ENCODE measurements at regions of chr16 and their contacts with region 1.

Region 1: DNA sequence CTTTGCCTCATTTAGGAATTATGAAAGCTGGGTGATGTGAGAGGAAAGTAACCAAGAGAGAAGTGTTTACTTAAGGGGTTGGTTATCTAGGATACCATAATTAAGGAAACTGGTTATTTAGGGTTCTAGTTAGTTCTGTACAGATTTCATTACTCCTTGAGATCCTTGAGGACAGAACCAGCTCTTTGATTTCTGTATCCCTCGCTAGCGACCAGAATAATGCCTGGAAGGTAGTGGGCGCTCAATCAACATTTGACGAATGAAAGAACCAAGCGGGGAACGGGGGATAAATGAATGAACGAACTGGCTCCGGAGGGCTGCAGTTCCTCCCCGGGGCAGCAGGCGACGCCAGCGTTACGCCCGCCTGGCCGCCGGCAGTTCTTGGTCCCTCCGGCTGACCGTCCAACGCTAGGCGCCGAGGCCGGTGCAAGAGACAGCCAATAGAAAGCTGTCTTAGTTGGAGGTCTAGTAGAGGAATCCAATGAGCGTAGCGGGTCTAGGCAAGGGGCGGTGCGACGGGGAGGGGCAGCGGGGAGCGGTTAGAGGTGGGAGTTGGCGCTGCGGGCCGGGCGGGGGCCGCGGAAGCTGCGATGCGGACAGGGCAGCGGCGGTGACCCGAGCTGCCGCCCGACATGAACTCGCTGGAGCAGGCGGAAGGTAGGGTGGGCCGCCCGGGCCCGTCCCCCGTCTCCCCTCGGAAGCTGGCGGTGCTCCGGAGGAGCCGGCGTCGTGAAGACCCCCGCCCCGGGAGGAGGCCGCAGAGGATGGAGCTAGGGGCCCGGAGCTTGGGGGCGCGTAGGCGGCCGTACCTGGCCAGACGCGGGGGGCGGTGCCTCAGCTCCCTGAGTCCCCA is at the start of gene CNEP1R1:
- DNase-seq: peak; percentile 88 to 95
- H3K4me3 ChIP-seq: peak within 1 kb of the TSS; percentile 78
- H3K27ac ChIP-seq: no peak within 1 kb of the TSS
- H3K4me1 ChIP-seq: peaks cover 12% of the 10 kb centered on the region
- H3K27me3 ChIP-seq: peaks cover 12% of the 10 kb centered on the region; the same call in 1 of the 2 replicates
- CTCF ChIP-seq: peak; percentile 99
- total RNA-seq, gene CNEP1R1: 10.4 and 12.2 TPM in 2 replicates

Region 2: GRCh38 chr16:49947907-49948650 is 76.8 kb before region 1 on chr16:
- CTCF ChIA-PET with region 1: no interaction called
- POLR2A ChIA-PET with region 1: no interaction called
- intact Hi-C with region 1: no loop called
- DNase-seq: no peak
- H3K4me3 ChIP-seq: no peak overlapping the region
- H3K27ac ChIP-seq: no peak overlapping the region
- H3K4me1 ChIP-seq: no peaks in the 10 kb centered on the region
- H3K27me3 ChIP-seq: peaks cover 39% of the 10 kb centered on the region
- CTCF ChIP-seq: no peak

Region 3: DNA sequence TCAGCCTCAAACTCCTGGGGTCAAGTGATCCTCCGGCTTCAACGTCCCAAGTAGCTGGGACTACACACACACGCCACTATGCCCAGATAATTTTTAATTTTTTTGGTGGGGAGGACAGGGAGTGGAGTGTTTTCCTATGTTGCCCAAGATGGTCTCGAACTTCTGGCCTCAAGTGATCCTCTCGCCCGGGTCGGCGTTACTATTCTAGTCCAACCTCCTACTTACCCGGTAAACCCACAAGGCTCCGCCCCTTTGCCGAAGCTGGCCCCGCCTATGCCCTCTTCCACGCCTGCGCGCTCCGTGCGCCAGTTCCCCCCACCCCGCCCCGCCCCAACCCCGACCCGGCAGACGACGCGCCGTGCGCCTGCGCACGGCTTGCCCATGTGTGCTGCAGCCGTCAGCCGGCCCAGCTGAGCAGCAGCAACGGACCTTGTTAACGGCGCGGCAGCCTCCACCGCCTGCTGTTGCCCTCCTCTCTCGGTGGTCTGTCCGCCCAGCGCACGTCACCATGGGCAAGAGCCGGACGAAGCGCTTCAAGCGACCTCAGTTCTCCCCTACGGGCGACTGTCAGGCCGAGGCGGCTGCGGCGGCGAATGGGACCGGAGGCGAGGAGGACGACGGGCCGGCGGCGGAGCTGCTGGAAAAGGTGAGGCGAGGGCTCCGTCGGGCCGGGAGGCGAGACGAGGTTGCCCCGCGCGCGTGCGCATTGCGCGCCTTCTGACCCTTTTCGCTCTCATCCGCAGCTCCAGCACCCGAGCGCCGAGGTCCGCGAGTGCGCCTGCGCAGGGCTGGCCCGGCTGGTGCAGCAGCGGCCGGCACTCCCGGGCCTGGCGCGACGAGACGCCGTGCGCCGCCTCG is 40.9 kb after region 1 on chr16 and contains the start of gene HEATR3:
- CTCF ChIA-PET with region 1: interaction called, 5 read pairs
- POLR2A ChIA-PET with region 1: no interaction called
- intact Hi-C with region 1: loop called (anchors 2 kb)
- DNase-seq: peak; percentile 70 to 91
- H3K4me3 ChIP-seq: peak within 1 kb of the TSS; percentile 94
- H3K27ac ChIP-seq: peak within 1 kb of the TSS; percentile 66
- H3K4me1 ChIP-seq: peaks cover 15% of the 10 kb centered on the region; the same call in 1 of the 2 replicates
- H3K27me3 ChIP-seq: no peaks in the 10 kb centered on the region
- CTCF ChIP-seq: no peak
- total RNA-seq, gene HEATR3: 11.5 and 14.3 TPM in 2 replicates

Region 4: DNA sequence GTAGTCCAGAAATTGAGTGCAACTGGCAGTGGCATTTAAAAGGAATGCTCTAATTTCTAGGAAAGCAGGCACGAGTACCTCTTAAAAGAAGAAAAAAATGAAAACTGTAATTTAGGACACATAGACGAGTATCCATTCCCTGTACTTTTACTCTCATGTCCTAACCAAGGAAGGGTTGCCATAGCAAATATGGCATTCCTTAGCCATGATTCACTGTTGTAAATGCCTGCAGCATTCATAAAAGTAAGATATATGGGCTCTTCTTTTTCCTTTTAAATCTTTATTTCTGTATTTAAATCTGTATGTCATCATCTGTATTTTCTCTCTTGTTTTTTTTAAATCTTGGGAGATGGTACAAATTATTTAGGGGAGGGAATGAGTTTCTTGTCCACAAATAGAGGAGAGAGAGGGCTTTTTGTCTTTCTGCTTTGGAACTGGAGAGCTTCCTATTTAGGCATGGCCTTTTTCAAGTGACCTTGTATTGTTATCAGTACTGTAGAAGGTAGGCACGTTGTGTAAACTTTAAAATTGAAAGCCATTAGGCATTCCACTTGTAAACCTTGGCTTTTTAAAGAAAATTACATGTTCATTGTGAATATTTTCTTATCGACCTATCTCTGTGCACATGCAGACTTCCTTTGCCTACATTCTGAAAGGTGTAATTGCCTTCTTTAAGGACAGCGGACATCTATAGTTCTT is 178.2 kb after region 1 on chr16:
- CTCF ChIA-PET with region 1: interaction called, 3 read pairs
- POLR2A ChIA-PET with region 1: interaction called, 3 read pairs
- intact Hi-C with region 1: loop called (anchors 2 kb)
- DNase-seq: peak; percentile 44 to 88
- H3K4me3 ChIP-seq: no peak overlapping the region
- H3K27ac ChIP-seq: peak overlapping the region; percentile 71
- H3K4me1 ChIP-seq: peaks cover 28% of the 10 kb centered on the region
- H3K27me3 ChIP-seq: no peaks in the 10 kb centered on the region
- CTCF ChIP-seq: no peak

Region 5: GRCh38 chr16:50313596-50314478 is 288.9 kb after region 1 on chr16:
- CTCF ChIA-PET with region 1: no interaction called
- POLR2A ChIA-PET with region 1: no interaction called
- intact Hi-C with region 1: loop called (anchors 5 kb)
- DNase-seq: peak in 1 of 2 experiments; percentile 16
- H3K4me3 ChIP-seq: no peak overlapping the region
- H3K27ac ChIP-seq: no peak overlapping the region
- H3K4me1 ChIP-seq: no peaks in the 10 kb centered on the region
- H3K27me3 ChIP-seq: no peaks in the 10 kb centered on the region
- CTCF ChIP-seq: no peak

Region 6: GRCh38 chr16:50665128-50665878 is 640.4 kb after region 1 on chr16:
- CTCF ChIA-PET with region 1: interaction called, 6 read pairs
- POLR2A ChIA-PET with region 1: no interaction called
- intact Hi-C with region 1: loop called (anchors 5 kb)
- DNase-seq: peak; percentile 51 to 79
- H3K4me3 ChIP-seq: peak overlapping the region; percentile 45; the same call in 1 of the 2 replicates
- H3K27ac ChIP-seq: no peak overlapping the region
- H3K4me1 ChIP-seq: peaks cover 14% of the 10 kb centered on the region
- H3K27me3 ChIP-seq: no peaks in the 10 kb centered on the region
- CTCF ChIP-seq: peak; percentile 93

Measured in PC-9 (cell line).